CD14-positive monocyte (primary cell): ENCODE measurements at regions of chr13 and their contacts with region 1.

Region 1: GRCh38 chr13:77079902-77080413 is 53.0 kb upstream of the FBXL3 start:
- DNase-seq: no peak
- H3K4me3 ChIP-seq: no peak overlapping the region
- H3K4me3 Mint-ChIP-seq: no peak overlapping the region
- H3K27ac ChIP-seq: peak overlapping the region in 1 of 2 donors; percentile 18
- H3K27ac Mint-ChIP-seq: peak overlapping the region in 1 of 7 donors; percentile 11
- H3K4me1 ChIP-seq: no peaks in the 10 kb centered on the region
- H3K4me1 Mint-ChIP-seq: no peaks in the 10 kb centered on the region
- H3K27me3 ChIP-seq: no peaks in the 10 kb centered on the region
- H3K27me3 Mint-ChIP-seq: no peaks in the 10 kb centered on the region
- CTCF ChIP-seq: no peak

Region 2: DNA sequence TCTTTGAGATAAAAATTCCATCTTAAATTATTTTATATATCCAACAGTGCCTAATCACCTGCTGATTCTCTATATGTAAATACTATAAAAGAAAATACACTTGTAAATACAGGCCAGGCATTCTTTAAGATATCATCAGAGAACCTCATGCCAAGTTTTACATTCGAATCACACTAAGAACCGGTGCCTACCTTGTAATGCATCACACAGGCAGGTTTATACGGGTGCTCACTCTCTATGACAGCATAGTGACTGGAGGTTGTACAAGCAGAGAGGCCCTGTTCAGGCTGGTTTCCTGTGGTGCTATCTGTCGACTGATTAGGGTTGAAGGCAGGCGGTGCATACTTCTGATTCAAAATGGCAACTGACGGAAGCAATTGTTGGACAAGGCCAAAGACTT is 88.3 kb after region 1 on chr13:
- intact Hi-C with region 1: loop called in 1 of 2 experiments (anchors 10 kb)
- DNase-seq: no peak
- H3K4me3 ChIP-seq: no peak overlapping the region
- H3K4me3 Mint-ChIP-seq: no peak overlapping the region
- H3K27ac ChIP-seq: no peak overlapping the region
- H3K27ac Mint-ChIP-seq: no peak overlapping the region
- H3K4me1 ChIP-seq: no peaks in the 10 kb centered on the region
- H3K4me1 Mint-ChIP-seq: no peaks in the 10 kb centered on the region
- H3K27me3 ChIP-seq: no peaks in the 10 kb centered on the region
- H3K27me3 Mint-ChIP-seq: no peaks in the 10 kb centered on the region
- CTCF ChIP-seq: no peak